ENCODE measurements at regions of chr12 and their contacts with region 1.

Region 1: DNA sequence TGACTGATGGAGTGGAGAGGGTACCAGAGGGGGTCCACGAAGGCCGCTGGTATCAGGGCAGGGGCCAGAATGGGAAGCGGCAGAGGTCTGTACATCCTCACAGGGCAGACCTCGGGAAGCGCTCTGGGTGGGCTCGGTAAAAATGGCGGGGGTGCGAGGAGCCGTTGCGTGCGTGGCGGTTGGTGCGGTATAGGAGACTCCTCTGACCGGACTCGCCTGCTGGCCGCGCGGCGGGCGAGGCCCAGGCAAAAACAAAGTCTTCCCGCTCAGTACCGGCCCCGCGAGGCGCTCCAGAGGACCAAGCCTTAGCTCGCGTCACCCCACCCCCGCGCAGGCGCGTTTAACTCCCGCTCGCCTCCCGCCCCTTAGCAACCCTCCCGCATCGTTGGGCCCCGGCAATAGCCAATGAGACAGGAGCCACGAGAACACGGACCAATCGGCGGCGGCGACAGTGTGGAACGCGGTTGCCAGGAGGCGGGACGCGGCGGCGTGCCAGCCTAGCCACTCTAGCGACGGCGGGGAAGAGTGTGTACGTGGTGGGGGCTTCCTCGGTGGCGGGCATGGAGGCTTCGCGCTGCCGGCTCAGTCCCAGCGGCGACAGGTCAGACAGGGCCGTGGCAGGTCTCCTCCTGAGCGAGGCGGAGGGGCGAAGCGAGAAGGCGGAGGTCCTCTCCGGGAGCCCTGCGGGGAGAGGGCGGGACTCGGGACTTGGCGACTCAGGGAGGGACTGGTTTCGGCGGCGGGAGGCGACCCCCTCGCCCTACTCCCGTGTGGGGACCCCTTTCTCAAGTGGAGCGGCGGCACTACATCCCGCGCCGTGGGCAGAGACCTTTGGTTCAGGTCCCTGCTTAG is at the start of gene TULP3:
- DNase-seq: peak; percentile 96
- H3K4me3 ChIP-seq: peak within 1 kb of the TSS; percentile 79 to 100 (median 96)
- H3K27ac ChIP-seq: peak within 1 kb of the TSS; percentile 89
- H3K4me1 ChIP-seq: peaks cover 12% of the 10 kb centered on the region
- H3K27me3 ChIP-seq: no peaks in the 10 kb centered on the region
- CTCF ChIP-seq: peak in 1 of 2 donors; percentile 16
- total RNA-seq, gene TULP3: 18.5 to 23.3 TPM

Region 2: DNA sequence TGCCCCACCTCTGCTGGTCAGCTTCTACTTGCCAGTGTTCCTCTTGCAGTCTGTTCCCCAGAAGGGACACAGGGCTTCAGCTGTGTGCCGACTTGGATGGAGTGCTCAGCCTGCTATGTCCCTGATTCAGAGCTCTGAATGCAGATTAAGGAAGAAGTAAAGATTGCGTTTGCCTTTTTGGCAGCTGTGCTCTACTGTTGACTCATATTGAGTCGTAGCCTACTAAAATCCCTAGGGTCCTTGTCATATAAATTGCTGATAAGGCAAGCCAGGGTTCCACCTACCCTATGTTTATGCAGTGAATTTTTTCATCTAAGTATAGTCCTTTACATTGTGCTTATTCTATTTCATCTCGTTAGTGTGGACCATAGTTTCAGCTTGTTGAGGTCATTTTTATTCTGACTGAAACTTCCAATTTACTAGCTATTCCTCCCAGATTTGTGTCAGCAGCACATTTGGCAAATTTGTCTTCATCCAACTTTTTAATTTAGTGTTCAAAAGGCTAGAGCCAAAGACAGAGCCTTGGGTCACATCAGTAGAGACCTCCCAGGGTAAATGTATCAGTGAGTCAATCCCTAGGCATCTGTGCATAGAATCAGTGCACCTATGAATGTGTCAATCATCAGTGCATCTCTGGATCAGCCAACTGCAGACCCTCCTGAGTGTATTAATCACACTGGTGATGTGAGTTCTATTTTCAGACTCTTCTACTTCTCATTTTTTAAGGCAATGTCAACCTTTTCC is 805.9 kb before region 1 on chr12:
- CTCF ChIA-PET with region 1: no interaction called
- dilution Hi-C with region 1: no loop called
- in situ Hi-C with region 1: no loop called
- intact Hi-C with region 1: no loop called
- DNase-seq: no peak
- H3K4me3 ChIP-seq: no peak overlapping the region
- H3K27ac ChIP-seq: no peak overlapping the region
- H3K4me1 ChIP-seq: no peaks in the 10 kb centered on the region
- H3K27me3 ChIP-seq: no peaks in the 10 kb centered on the region
- CTCF ChIP-seq: no peak

Region 3: GRCh38 chr12:3041558-3042164 is 151.0 kb after region 1 on chr12:
- CTCF ChIA-PET with region 1: interaction called, 11 read pairs
- dilution Hi-C with region 1: no loop called
- in situ Hi-C with region 1: loop called in 1 of 2 experiments (anchors 25 kb)
- intact Hi-C with region 1: no loop called
- DNase-seq: peak; percentile 69
- H3K4me3 ChIP-seq: no peak overlapping the region
- H3K27ac ChIP-seq: no peak overlapping the region
- H3K4me1 ChIP-seq: no peaks in the 10 kb centered on the region
- H3K27me3 ChIP-seq: no peaks in the 10 kb centered on the region
- CTCF ChIP-seq: peak; percentile 59 to 75

Region 4: GRCh38 chr12:3269594-3269993 is 379.0 kb after region 1 on chr12:
- CTCF ChIA-PET with region 1: no interaction called
- dilution Hi-C with region 1: no loop called
- in situ Hi-C with region 1: no loop called
- intact Hi-C with region 1: loop called (anchors 5 kb)
- DNase-seq: no peak
- H3K4me3 ChIP-seq: no peak overlapping the region
- H3K27ac ChIP-seq: no peak overlapping the region
- H3K4me1 ChIP-seq: peaks cover 9% of the 10 kb centered on the region
- H3K27me3 ChIP-seq: no peaks in the 10 kb centered on the region
- CTCF ChIP-seq: no peak